ENCODE measurements at regions of chr5 and their contacts with region 1.

Region 1: GRCh38 chr5:37197340-37198050 is 51.7 kb downstream of the CPLANE1 start:
- DNase-seq: peak; percentile 50
- CTCF ChIP-seq: no peak

Region 2: DNA sequence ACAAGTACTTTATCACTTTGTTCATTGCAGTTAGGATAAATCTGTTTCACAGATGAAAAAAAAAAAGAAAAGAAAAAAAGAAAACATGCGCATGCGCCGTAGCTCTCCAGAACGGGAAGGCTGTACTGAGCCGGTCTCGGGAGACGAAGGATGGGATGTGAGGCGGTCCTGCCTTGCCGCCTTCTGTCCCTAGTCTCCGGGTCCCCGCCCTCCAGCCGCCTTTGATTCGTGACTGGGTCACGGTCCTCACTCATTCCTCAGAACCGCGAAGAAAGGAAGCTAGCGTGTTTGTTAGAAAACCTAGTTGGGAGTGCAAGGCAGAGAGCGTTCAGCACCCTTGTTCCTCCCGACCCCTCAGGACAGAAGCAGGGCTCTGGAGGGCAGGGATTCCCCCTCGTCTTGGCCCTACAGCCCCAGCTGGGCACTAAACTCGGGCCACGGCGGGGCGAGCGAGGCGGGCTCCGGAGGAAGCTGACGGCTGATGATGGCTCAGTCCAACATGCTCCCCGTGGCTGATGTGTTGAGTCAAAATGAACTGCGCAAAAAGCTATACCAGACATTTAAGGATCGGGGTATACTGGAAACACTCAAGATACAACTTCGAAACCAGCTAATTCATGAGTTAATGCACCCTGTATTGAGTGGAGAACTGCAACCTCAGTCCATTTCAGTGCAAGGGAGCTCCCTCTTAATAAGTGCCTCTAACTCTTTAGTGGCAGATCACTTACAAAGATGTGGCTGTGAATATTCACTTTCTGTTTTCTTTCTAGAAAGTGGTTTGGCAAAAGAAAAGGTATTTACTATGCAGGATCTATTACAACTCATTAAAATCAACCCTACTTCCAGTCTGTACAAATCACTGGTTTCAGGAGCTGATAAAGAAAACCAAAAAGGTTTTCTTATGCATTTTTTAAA is 11.6 kb after region 1 on chr5:
- CTCF ChIA-PET with region 1: interaction called, 10 read pairs
- POLR2A ChIA-PET with region 1: interaction called, 4 read pairs
- DNase-seq: peak; percentile 42
- CTCF ChIP-seq: no peak

Region 3: GRCh38 chr5:37520811-37521210 is 323.3 kb after region 1 on chr5:
- CTCF ChIA-PET with region 1: no interaction called
- POLR2A ChIA-PET with region 1: no interaction called
- DNase-seq: no peak
- CTCF ChIP-seq: no peak

Measured in GM10248 (cell line).